WTC11 (cell line): ENCODE measurements at regions of chr9 and their contacts with region 1.

Region 1: GRCh38 chr9:129597355-129598088 is 23.4 kb downstream of the C9orf50 start:
- DNase-seq: peak; percentile 74
- ATAC-seq: peak; percentile 29
- H3K4me3 Mint-ChIP-seq: peak overlapping the region; percentile 56
- H3K27ac Mint-ChIP-seq: no peak overlapping the region
- H3K4me1 Mint-ChIP-seq: peaks cover 44% of the 10 kb centered on the region
- H3K27me3 Mint-ChIP-seq: peaks cover 52% of the 10 kb centered on the region
- CTCF ChIP-seq: no peak

Region 2: GRCh38 chr9:129569502-129570449 is 27.7 kb before region 1 on chr9:
- CTCF ChIA-PET with region 1: interaction called, 16 read pairs
- POLR2A ChIA-PET with region 1: interaction called, 12 read pairs
- DNase-seq: no peak
- ATAC-seq: peak; percentile 11; the same call in 1 of the 2 replicates
- H3K4me3 Mint-ChIP-seq: peak overlapping the region; percentile 78
- H3K27ac Mint-ChIP-seq: no peak overlapping the region
- H3K4me1 Mint-ChIP-seq: peaks cover 30% of the 10 kb centered on the region
- H3K27me3 Mint-ChIP-seq: peaks cover 17% of the 10 kb centered on the region
- CTCF ChIP-seq: no peak

Region 3: DNA sequence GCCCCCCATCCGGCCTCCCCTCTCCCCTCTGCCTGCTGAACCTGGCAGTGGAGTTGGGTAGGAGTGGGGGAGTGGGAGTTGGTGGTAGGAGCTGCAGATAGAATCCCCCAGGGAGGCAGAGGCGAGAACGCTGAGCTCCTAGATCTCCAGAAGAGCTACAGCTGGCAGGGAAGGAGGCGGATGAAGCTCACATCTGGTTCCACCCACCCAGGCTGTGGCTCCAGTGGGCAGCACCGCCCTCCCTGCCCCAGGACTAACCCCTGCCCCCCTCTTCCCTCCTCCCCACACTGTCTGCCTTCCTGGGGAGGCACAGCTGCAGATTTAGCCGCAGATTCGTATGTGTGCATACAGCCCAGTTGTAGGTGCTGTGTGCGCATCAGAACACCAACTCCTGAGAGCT is 10.8 kb before region 1 on chr9:
- CTCF ChIA-PET with region 1: interaction called, 11 read pairs
- POLR2A ChIA-PET with region 1: interaction called, 10 read pairs
- DNase-seq: no peak
- ATAC-seq: no peak; the same call in 1 of the 2 replicates
- H3K4me3 Mint-ChIP-seq: no peak overlapping the region
- H3K27ac Mint-ChIP-seq: no peak overlapping the region
- H3K4me1 Mint-ChIP-seq: peaks cover 36% of the 10 kb centered on the region
- H3K27me3 Mint-ChIP-seq: peaks cover 29% of the 10 kb centered on the region
- CTCF ChIP-seq: no peak

Region 4: GRCh38 chr9:129610473-129611301 is 13.2 kb after region 1 on chr9:
- CTCF ChIA-PET with region 1: interaction called, 34 read pairs
- POLR2A ChIA-PET with region 1: interaction called, 6 read pairs
- DNase-seq: peak; percentile 94
- ATAC-seq: peak; percentile 61
- H3K4me3 Mint-ChIP-seq: peak overlapping the region; percentile 72
- H3K27ac Mint-ChIP-seq: peak overlapping the region; percentile 74; the same call in 1 of the 2 replicates
- H3K4me1 Mint-ChIP-seq: peaks cover 24% of the 10 kb centered on the region
- H3K27me3 Mint-ChIP-seq: peaks cover 11% of the 10 kb centered on the region
- CTCF ChIP-seq: peak; percentile 92

Region 5: GRCh38 chr9:129676975-129677841 is 79.7 kb after region 1 on chr9:
- CTCF ChIA-PET with region 1: no interaction called
- POLR2A ChIA-PET with region 1: no interaction called
- DNase-seq: no peak
- ATAC-seq: peak; percentile 55
- H3K4me3 Mint-ChIP-seq: no peak overlapping the region
- H3K27ac Mint-ChIP-seq: no peak overlapping the region
- H3K4me1 Mint-ChIP-seq: peaks cover 9% of the 10 kb centered on the region; the same call in 1 of the 2 replicates
- H3K27me3 Mint-ChIP-seq: no peaks in the 10 kb centered on the region; the same call in 1 of the 2 replicates
- CTCF ChIP-seq: no peak